Activated CD4-positive, alpha-beta T cell treated with anti-CD3 and anti-CD28 coated beads for 36 hours (primary cell): ENCODE measurements at regions of chr11 and their contacts with region 1.

Region 1: GRCh38 chr11:92329646-92330045 is 105.0 kb downstream of the FAT3 start:
- DNase-seq: no peak
- ATAC-seq: no peak
- H3K4me3 Mint-ChIP-seq: no peak overlapping the region
- H3K27ac Mint-ChIP-seq: no peak overlapping the region
- H3K4me1 Mint-ChIP-seq: no peaks in the 10 kb centered on the region
- H3K27me3 Mint-ChIP-seq: no peaks in the 10 kb centered on the region

Region 2: GRCh38 chr11:92357344-92357743 is 27.7 kb after region 1 on chr11:
- CTCF ChIA-PET with region 1: no interaction called
- POLR2A ChIA-PET with region 1: no interaction called
- intact Hi-C with region 1: no loop called
- DNase-seq: no peak
- ATAC-seq: no peak
- H3K4me3 Mint-ChIP-seq: no peak overlapping the region
- H3K27ac Mint-ChIP-seq: no peak overlapping the region
- H3K4me1 Mint-ChIP-seq: no peaks in the 10 kb centered on the region
- H3K27me3 Mint-ChIP-seq: no peaks in the 10 kb centered on the region

Region 3: GRCh38 chr11:93356547-93356946 is 1026.9 kb after region 1 on chr11:
- CTCF ChIA-PET with region 1: no interaction called
- POLR2A ChIA-PET with region 1: no interaction called
- intact Hi-C with region 1: loop called in 1 of 2 experiments (anchors 10 kb)
- DNase-seq: no peak
- ATAC-seq: no peak
- H3K4me3 Mint-ChIP-seq: no peak overlapping the region
- H3K27ac Mint-ChIP-seq: no peak overlapping the region
- H3K4me1 Mint-ChIP-seq: no peaks in the 10 kb centered on the region
- H3K27me3 Mint-ChIP-seq: no peaks in the 10 kb centered on the region